ENCODE measurements at regions of chr11 and their contacts with region 1.

Region 1: GRCh38 chr11:64317957-64318693 is at the start of gene PRDX5:
- DNase-seq: peak; percentile 90 to 99 (median 93)
- ATAC-seq: peak; percentile 75
- H3K4me3 ChIP-seq: peak within 1 kb of the TSS; percentile 66 to 69
- H3K4me3 Mint-ChIP-seq: peak within 1 kb of the TSS; percentile 89
- H3K27ac ChIP-seq: peak within 1 kb of the TSS; percentile 97 to 100
- H3K27ac Mint-ChIP-seq: peak within 1 kb of the TSS; percentile 99
- H3K4me1 ChIP-seq: peaks cover 8% of the 10 kb centered on the region
- H3K4me1 Mint-ChIP-seq: peaks cover 32% of the 10 kb centered on the region
- H3K27me3 ChIP-seq: no peaks in the 10 kb centered on the region
- H3K27me3 Mint-ChIP-seq: no peaks in the 10 kb centered on the region
- CTCF ChIP-seq: no peak
- total RNA-seq, gene PRDX5: 39.9 to 41.0 TPM

Region 2: GRCh38 chr11:64204464-64204989 is 113.6 kb before region 1 on chr11:
- CTCF ChIA-PET with region 1: interaction called, 22 read pairs
- POLR2A ChIA-PET with region 1: interaction called, 15 read pairs
- intact Hi-C with region 1: no loop called
- DNase-seq: peak; percentile 72 to 94 (median 87)
- ATAC-seq: peak; percentile 51
- H3K4me3 ChIP-seq: no peak overlapping the region
- H3K4me3 Mint-ChIP-seq: peak overlapping the region; percentile 63
- H3K27ac ChIP-seq: peak overlapping the region in 1 of 2 experiments; percentile 25
- H3K27ac Mint-ChIP-seq: peak overlapping the region; percentile 75
- H3K4me1 ChIP-seq: peaks cover 29% of the 10 kb centered on the region
- H3K4me1 Mint-ChIP-seq: peaks cover 37% of the 10 kb centered on the region
- H3K27me3 ChIP-seq: no peaks in the 10 kb centered on the region
- H3K27me3 Mint-ChIP-seq: no peaks in the 10 kb centered on the region
- CTCF ChIP-seq: peak; percentile 71

Region 3: DNA sequence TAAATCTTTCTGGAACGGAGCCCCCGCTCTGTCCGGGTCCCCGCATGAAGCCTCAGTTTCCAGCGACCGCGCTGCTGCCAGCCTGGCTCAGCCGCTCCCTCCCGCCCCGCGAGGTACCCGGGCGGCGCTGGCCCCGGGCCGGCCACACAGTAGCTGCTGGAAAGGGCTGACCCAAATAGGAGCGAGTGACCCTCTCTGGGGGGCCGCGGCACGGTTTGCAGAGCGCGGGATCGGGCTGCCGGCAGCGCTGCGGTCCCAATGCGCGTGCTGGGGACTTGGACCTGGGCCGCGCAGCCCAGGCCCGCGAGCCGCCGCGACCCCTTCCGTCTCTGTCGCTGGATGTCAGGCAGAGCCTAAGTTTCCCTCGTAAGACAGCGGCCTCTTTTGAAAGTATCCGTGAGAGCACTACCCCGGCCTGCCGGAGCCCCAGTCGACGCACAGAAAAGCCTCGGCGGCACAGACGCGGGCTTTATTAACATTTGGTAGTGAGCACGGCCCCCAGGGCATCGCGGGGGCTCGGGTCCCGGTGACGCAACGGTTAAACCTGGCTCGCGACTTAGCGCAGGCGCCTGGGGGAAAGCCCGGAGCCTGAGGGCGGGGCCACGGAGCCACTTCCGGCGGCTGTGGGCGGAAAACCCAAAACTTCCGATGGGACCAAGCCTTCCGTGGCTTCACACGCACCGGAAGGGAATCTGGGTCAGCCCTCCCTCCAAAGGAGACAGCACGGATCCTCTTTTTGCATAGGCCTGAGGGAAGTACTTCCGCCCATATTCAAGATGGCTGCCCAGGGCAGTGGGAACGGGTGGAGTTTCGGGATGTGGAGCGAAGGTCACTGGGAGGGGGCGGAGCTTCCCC is 48.5 kb before region 1 on chr11:
- CTCF ChIA-PET with region 1: interaction called, 4 read pairs
- POLR2A ChIA-PET with region 1: interaction called, 29 read pairs
- intact Hi-C with region 1: loop called (anchors 1 kb)
- DNase-seq: peak; percentile 94 to 99 (median 97)
- ATAC-seq: peak; percentile 64
- H3K4me3 ChIP-seq: peak overlapping the region; percentile 79 to 81
- H3K4me3 Mint-ChIP-seq: peak overlapping the region; percentile 95
- H3K27ac ChIP-seq: peak overlapping the region; percentile 69 to 99
- H3K27ac Mint-ChIP-seq: peak overlapping the region; percentile 94
- H3K4me1 ChIP-seq: peaks cover 24% of the 10 kb centered on the region
- H3K4me1 Mint-ChIP-seq: peaks cover 27% of the 10 kb centered on the region
- H3K27me3 ChIP-seq: no peaks in the 10 kb centered on the region
- H3K27me3 Mint-ChIP-seq: no peaks in the 10 kb centered on the region
- CTCF ChIP-seq: peak; percentile 40

Region 4: GRCh38 chr11:64291752-64292459 is 26.2 kb before region 1 on chr11:
- CTCF ChIA-PET with region 1: no interaction called
- POLR2A ChIA-PET with region 1: no interaction called
- intact Hi-C with region 1: no loop called
- DNase-seq: peak in 2 of 9 experiments; percentile 51 to 55
- ATAC-seq: peak; percentile 70
- H3K4me3 ChIP-seq: peak overlapping the region in 1 of 2 experiments; percentile 30
- H3K4me3 Mint-ChIP-seq: no peak overlapping the region
- H3K27ac ChIP-seq: no peak overlapping the region
- H3K27ac Mint-ChIP-seq: no peak overlapping the region
- H3K4me1 ChIP-seq: peaks cover 14% of the 10 kb centered on the region
- H3K4me1 Mint-ChIP-seq: peaks cover 12% of the 10 kb centered on the region
- H3K27me3 ChIP-seq: peaks cover 30 to 31% of the 10 kb centered on the region in 2 experiments
- H3K27me3 Mint-ChIP-seq: peaks cover 46% of the 10 kb centered on the region
- CTCF ChIP-seq: no peak

Region 5: GRCh38 chr11:64341851-64342791 is 24.0 kb after region 1 on chr11:
- CTCF ChIA-PET with region 1: interaction called, 9 read pairs
- POLR2A ChIA-PET with region 1: interaction called, 24 read pairs
- intact Hi-C with region 1: loop called (anchors 1 kb)
- DNase-seq: peak; percentile 75 to 90 (median 88)
- ATAC-seq: peak; percentile 63
- H3K4me3 ChIP-seq: no peak overlapping the region
- H3K4me3 Mint-ChIP-seq: peak overlapping the region; percentile 84
- H3K27ac ChIP-seq: peak overlapping the region in 1 of 2 experiments; percentile 86
- H3K27ac Mint-ChIP-seq: no peak overlapping the region
- H3K4me1 ChIP-seq: peaks cover 34% of the 10 kb centered on the region
- H3K4me1 Mint-ChIP-seq: peaks cover 41% of the 10 kb centered on the region
- H3K27me3 ChIP-seq: no peaks in the 10 kb centered on the region
- H3K27me3 Mint-ChIP-seq: no peaks in the 10 kb centered on the region
- CTCF ChIP-seq: peak; percentile 36

Region 6: GRCh38 chr11:64723117-64723906 is 405.2 kb after region 1 on chr11 and contains the start of gene NRXN2:
- CTCF ChIA-PET with region 1: no interaction called
- POLR2A ChIA-PET with region 1: no interaction called
- intact Hi-C with region 1: loop called in 1 of 2 experiments (anchors 10 kb)
- DNase-seq: peak; percentile 62 to 94 (median 83)
- ATAC-seq: peak; percentile 94
- H3K4me3 ChIP-seq: peak within 1 kb of the TSS; percentile 71 to 78
- H3K4me3 Mint-ChIP-seq: peak within 1 kb of the TSS; percentile 70
- H3K27ac ChIP-seq: peak within 1 kb of the TSS; percentile 49 to 71
- H3K27ac Mint-ChIP-seq: no peak within 1 kb of the TSS
- H3K4me1 ChIP-seq: peaks cover 21% of the 10 kb centered on the region
- H3K4me1 Mint-ChIP-seq: peaks cover 18% of the 10 kb centered on the region
- H3K27me3 ChIP-seq: peaks cover 0 to 7% of the 10 kb centered on the region in 2 experiments
- H3K27me3 Mint-ChIP-seq: peaks cover 9% of the 10 kb centered on the region
- CTCF ChIP-seq: peak; percentile 97
- total RNA-seq, gene NRXN2: 0.17 to 0.43 TPM